Common myeloid progenitor, CD34-positive (primary cell): ENCODE measurements at regions of chr2 and their contacts with region 1.

Region 1: DNA sequence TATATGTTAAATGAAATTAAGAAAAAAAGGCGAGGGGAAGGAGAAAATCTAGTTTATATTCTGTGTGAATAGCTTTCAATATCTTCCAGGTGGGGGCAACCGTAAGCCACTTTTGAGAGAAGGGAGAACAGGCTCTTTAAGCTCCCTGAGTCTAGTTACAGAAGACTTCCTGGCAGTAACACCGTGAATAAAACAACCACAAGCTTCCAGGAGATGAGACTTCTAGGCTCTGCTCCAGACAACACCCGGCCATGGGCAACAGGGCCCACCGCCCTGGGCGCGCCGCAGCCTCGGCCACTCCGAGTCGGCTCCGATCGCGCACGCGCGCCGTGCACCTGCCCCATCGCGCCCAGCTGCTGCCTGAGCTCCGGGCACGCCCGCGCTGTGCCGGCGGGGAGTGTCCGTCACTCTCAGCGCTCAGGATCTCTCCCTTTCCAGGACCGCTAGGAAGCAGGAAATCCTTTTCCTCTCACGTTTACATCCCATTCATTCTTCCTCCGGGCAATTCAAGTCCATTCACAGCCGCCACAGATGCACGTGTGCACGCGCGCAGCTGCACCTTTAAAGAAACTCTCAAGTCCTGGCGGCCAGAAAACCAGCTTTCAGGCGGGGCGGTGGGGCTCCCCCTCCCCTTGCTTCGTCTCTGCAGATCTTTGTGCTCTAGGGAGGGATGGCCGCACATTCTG is 19.4 kb upstream of the PAX3 start:
- DNase-seq: peak; percentile 70 to 84 (median 84)
- H3K4me3 ChIP-seq: peak overlapping the region in 6 of 7 experiments; percentile 56 to 76 (median 66)
- H3K27ac ChIP-seq: no peak overlapping the region
- H3K4me1 ChIP-seq: peaks cover 0 to 23% (median 22%) of the 10 kb centered on the region in 4 experiments
- H3K27me3 ChIP-seq: peaks cover 33 to 79% (median 50%) of the 10 kb centered on the region in 5 experiments

Region 2: DNA sequence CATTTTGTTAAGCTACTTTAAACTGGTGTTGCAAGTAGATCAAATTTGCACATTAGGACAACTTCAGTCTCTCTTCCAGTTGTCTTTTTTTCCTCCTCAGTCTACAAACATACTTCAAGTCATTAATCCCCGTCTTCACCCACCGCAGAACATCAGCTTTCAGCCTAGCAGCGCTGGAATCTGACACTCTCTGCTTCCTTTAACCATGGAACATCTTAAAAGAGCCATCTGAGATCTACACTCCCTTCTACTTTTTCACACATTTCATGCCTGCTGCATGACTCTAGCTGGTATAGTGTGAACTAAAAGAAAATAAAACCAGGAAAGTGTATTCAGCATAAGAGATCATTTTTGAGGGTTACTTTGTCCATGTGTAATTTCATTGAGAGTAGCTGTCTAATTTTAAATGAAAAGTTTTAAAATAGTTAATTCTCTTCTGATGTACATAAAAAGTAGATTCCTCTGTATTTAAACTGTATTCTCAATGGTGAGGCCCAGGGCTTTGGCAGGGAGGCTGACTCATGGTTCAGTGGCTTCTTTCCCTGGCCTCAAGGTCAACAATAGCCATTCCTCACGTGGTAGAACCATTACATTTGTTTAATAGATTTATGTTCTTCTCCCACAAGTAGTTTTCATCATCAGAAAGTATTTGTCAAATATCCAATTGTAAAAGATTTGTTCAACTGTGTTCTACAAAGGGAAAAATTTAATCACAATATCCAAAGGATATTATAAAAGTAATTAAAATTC is 122.7 kb after region 1 on chr2:
- CTCF ChIA-PET with region 1: no interaction called
- POLR2A ChIA-PET with region 1: no interaction called
- DNase-seq: no peak
- H3K4me3 ChIP-seq: no peak overlapping the region
- H3K27ac ChIP-seq: no peak overlapping the region
- H3K4me1 ChIP-seq: no peaks in the 10 kb centered on the region
- H3K27me3 ChIP-seq: no peaks in the 10 kb centered on the region

Region 3: DNA sequence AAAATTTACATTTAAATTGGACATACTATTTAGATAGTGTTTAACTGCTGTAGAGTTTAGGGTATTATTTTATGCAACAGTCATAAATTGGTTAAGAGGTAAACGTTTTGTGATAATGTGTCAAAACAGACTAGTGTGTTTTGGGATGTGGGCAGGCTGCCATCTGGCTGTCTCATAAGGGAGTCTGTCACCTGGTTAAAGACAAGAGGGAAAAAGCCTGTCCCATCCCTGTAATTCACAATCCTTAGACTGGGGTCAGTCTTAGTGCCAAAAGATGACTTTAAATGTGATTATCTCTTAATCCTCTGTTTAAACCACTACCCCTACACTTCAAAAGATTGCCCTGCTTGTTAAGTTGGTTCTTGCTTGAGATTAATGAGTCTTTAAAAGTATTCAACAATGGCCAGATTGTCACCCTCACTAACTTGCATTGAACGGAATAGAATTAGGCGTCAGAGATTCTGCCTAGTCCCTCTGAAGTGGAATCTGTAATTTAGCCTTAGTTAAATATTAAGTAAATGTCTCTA is 165.4 kb after region 1 on chr2:
- CTCF ChIA-PET with region 1: interaction called, 28 read pairs
- POLR2A ChIA-PET with region 1: no interaction called
- DNase-seq: peak; percentile 35 to 55 (median 48)
- H3K4me3 ChIP-seq: no peak overlapping the region
- H3K27ac ChIP-seq: no peak overlapping the region
- H3K4me1 ChIP-seq: no peaks in the 10 kb centered on the region
- H3K27me3 ChIP-seq: peaks cover 0 to 20% (median 11%) of the 10 kb centered on the region in 5 experiments

Region 4: GRCh38 chr2:222561817-222562645 is 243.9 kb after region 1 on chr2:
- CTCF ChIA-PET with region 1: interaction called, 27 read pairs
- POLR2A ChIA-PET with region 1: no interaction called
- DNase-seq: peak; percentile 68 to 76 (median 70)
- H3K4me3 ChIP-seq: no peak overlapping the region
- H3K27ac ChIP-seq: no peak overlapping the region
- H3K4me1 ChIP-seq: no peaks in the 10 kb centered on the region
- H3K27me3 ChIP-seq: peaks cover 0 to 5% (median 0%) of the 10 kb centered on the region in 5 experiments

Region 5: GRCh38 chr2:222604749-222605515 is 286.8 kb after region 1 on chr2:
- CTCF ChIA-PET with region 1: interaction called, 12 read pairs
- POLR2A ChIA-PET with region 1: no interaction called
- DNase-seq: no peak
- H3K4me3 ChIP-seq: no peak overlapping the region
- H3K27ac ChIP-seq: no peak overlapping the region
- H3K4me1 ChIP-seq: no peaks in the 10 kb centered on the region
- H3K27me3 ChIP-seq: no peaks in the 10 kb centered on the region

Region 6: GRCh38 chr2:222613715-222614331 is 295.7 kb after region 1 on chr2:
- CTCF ChIA-PET with region 1: interaction called, 19 read pairs
- POLR2A ChIA-PET with region 1: no interaction called
- DNase-seq: peak; percentile 42 to 71 (median 67)
- H3K4me3 ChIP-seq: no peak overlapping the region
- H3K27ac ChIP-seq: no peak overlapping the region
- H3K4me1 ChIP-seq: no peaks in the 10 kb centered on the region
- H3K27me3 ChIP-seq: no peaks in the 10 kb centered on the region